ENCODE measurements at regions of chr3 and their contacts with region 1.

Region 1: DNA sequence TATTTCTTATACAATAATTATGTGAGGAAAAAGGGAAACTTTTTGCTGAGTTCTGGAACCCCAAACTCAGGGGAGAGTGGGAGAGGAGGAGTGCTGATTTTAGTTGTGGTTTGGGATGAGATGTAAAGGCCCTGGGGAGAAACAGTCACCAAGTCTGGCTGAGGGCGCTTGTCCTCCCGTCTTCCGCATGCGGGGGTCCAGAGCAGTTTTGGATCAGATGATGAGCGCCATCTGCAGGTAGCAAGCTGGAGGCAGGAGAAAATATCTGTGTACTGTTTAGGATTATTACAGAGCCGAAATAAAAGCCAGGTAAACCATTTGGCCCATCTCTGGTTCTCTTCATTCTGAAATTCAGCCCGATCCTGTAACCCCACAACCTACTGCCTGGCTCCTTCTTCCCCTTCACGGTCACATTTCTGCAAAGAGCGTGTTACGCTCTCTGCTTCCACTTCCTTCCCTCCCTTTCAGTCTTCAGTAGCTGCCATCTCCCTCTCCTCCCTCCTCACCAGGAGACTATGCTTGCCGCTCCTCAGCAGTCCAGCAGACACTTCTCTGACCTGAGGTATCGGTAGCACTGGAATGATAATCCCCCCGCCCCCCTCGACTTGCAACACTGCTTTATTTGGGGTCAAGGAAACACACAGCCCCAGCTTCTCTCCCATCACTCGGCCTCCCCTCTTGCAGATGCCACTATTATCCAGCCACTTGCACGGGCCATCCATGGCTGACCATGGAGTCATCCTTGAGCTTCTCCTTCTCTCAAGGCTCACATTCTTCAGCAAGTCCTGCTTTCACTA is 1.4 kb upstream of the PARP14 start:
- DNase-seq: peak; percentile 46 to 81 (median 66)
- H3K4me3 ChIP-seq: peak overlapping the region; percentile 14 to 89 (median 75)
- H3K27ac ChIP-seq: peak overlapping the region in 57 of 59 donors; percentile 6 to 95 (median 82)
- H3K27me3 ChIP-seq: peaks cover 0 to 4% (median 0%) of the 10 kb centered on the region in 45 donors
- CTCF ChIP-seq: peak; percentile 53 to 89 (median 80)

Region 2: GRCh38 chr3:122392868-122393844 is 286.1 kb before region 1 on chr3:
- intact Hi-C with region 1: loop called (anchors 5 kb)
- DNase-seq: no peak
- H3K4me3 ChIP-seq: peak overlapping the region in 1 of 59 donors; percentile 8
- H3K27ac ChIP-seq: peak overlapping the region in 21 of 59 donors; percentile 0 to 60 (median 24)
- H3K27me3 ChIP-seq: no peaks in the 10 kb centered on the region
- CTCF ChIP-seq: peak; percentile 57 to 85 (median 72)

Region 3: GRCh38 chr3:122458992-122459391 is 220.3 kb before region 1 on chr3:
- intact Hi-C with region 1: loop called in 1 of 2 experiments (anchors 2 kb)
- DNase-seq: no peak
- H3K4me3 ChIP-seq: no peak overlapping the region
- H3K27ac ChIP-seq: no peak overlapping the region
- H3K27me3 ChIP-seq: no peaks in the 10 kb centered on the region
- CTCF ChIP-seq: peak in 55 of 56 donors; percentile 34 to 69 (median 51)

Region 4: DNA sequence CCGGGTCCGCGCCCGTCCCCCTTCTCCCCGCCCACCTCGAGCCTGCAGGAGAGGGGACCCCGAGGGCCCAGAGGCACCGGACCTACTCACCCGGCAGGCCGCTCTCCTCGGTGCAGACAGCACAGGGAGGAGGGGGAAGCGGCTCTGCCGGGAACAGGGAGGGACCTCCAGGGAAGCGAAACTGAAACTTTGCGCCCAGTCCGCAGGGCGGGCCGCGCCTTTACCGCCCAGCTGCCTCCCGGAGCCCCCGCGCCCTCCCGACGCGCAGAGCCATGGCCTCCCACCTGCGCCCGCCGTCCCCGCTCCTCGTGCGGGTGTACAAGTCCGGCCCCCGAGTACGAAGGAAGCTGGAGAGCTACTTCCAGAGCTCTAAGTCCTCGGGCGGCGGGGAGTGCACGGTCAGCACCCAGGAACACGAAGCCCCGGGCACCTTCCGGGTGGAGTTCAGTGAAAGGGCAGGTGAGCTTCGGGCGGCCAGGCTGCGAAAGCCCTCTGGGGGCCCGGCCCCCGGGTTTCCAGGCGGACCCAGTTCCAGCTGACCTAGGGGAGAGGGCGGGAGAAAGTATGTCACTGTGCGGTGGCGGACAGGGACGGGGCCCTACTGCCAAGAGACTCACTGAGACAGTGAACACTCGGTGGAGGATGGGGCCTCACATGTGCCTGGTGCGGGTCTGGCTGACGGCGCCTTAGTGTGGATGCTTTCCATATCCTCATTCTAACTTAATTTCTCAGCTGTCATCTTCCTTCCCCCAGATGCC is 114.9 kb before region 1 on chr3 and contains the starts of genes DTX3L and PARP9:
- intact Hi-C with region 1: loop called (anchors 1 to 5 kb)
- DNase-seq: peak; percentile 11 to 79 (median 58)
- H3K4me3 ChIP-seq: peak within 1 kb of the TSS; percentile 62 to 98 (median 84)
- H3K27ac ChIP-seq: peak within 1 kb of the TSS; percentile 4 to 95 (median 83)
- H3K27me3 ChIP-seq: no peaks in the 10 kb centered on the region
- CTCF ChIP-seq: peak in 4 of 56 donors; percentile 2 to 30 (median 9)
- total RNA-seq, gene DTX3L: 2.9 to 28.9 (median 9.0) TPM
- total RNA-seq, gene PARP9: 4.7 to 38.4 (median 11.6) TPM

Region 5: DNA sequence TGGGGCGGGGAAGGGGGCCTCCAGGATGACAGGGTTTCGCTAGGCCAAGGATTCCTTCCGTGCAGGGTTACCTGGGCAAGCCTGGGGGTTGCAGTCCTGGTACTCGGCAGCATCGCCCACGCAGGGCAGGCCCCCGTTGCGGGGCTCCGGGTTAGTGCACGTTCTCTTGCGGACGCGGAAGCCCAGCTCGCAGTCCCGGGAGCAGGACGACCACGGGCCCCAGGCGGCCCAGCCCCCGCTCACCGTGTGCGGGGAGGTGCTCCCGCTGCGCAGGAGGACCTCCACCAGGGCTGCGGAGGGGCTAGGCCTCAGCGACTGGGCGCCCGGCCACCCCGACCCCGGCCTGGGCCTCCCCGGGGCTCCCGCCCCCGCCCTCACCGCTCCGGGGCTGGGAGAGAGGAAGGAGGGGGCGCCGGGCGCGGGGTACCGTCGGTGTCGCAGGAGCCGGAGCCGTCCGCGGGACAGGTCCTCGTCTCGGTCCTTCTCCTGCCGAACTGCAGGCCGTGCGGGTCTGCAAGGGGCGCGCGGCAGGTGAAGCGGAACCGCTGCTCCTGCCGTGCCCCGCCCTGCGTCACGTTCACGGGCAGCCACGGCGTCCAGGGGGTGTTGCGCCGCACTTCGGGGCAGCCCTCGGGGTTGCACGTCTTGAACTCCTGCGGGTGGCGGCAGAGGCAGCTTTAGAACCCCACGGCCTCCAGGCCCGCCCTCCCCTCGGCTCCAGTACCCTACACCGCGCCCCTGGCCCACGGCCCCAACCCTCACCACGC is 233.7 kb after region 1 on chr3:
- intact Hi-C with region 1: no loop called
- DNase-seq: no peak
- H3K4me3 ChIP-seq: no peak overlapping the region
- H3K27ac ChIP-seq: no peak overlapping the region
- H3K27me3 ChIP-seq: no peaks in the 10 kb centered on the region
- CTCF ChIP-seq: no peak